ENCODE measurements at regions of chr4 and their contacts with region 1.

Region 1: DNA sequence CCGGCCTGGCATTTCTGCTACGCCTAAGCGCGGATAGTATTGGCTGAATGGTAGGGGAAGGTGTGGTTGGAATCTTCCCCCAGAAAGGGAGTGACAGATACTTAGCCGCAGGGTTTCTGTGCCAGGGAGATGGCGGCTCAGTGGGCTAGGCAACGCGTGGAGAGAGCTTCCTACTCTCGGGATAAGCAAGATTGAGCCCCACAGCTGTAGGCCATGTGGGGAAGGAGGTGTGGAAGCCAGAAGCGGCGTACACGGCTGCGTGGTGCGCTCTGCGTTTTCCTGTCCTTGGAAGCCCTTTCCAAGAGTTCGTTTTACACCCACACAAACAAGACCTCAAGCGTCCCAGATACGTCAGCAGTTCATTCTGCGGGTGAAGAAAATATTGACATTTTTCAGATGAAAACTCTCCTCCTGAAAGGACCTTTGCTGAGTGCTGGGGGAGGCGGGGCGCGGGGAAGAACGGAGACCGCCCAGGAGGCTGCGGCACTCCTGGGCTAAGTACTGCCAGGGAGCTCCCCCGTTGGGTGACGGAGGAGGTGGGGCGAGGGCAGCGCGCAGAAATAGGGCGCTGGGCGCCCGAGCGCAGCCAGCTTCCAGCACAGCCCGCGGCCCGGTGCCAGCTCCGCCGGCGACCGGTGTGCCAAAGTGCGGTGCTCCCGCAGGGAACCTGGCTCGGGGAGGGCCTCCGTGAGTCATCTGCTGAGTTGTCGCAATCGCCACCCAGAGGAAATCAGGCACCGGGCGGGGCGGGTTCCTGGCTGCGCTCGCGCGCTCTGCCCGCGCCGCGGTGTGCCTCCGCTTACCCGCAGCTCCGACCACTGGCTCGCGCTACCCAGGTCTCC is at the start of gene GPAT3:
- DNase-seq: peak; percentile 89
- H3K4me3 Mint-ChIP-seq: peak within 1 kb of the TSS; percentile 87
- H3K27ac Mint-ChIP-seq: peak within 1 kb of the TSS; percentile 61
- H3K4me1 Mint-ChIP-seq: peaks cover 13% of the 10 kb centered on the region
- H3K27me3 Mint-ChIP-seq: peaks cover 49% of the 10 kb centered on the region
- total RNA-seq, gene GPAT3: 3.6 and 3.7 TPM in 2 replicates

Region 2: DNA sequence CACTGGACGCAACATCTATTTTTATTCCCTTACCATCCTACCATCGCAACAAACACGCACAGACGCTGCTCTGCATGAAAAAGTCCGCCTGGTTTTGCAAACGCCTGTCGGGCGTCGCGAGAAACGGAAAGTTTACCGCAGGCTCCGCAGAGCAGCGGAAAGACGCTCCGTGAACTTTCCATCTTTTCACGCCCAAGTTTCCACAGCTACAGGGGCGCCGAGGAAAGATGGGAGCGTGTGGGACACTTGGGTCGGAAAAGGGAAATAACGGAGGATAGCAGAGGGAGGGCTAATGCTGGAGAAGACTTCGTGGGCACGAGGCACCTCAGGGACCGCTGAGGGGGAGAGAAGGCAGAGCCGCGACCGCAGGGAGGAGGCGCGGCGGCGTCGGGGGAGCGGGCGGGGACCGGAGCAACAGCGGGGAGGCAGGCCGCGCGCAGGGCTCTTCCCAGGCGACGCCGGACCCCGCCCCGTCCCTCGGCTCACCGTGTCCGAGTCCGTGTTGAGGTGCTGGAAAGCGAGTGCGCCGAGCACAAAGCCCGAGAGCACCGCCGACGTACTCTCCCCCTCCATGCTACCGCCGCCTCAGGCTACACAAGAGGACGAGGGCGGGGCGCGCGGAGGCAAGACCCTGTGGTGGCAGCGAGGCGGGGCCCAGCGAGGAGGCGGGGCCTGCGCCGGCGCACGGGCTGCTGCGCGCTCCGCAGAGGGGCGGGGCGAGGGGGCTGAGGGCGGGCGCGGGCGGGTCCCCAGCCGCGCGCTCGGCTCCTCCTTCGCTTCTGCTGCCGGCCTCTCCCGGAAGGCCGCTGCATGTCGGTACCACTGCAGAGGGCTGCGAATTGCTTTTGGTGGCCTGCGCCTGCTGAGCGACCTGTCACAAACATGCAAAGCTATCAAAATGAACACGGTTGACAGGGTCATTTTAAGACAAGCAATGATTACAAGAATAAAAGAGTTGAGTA is 51.0 kb before region 1 on chr4 and contains the start of gene ABRAXAS1:
- intact Hi-C with region 1: loop called (anchors 2 kb)
- DNase-seq: peak; percentile 98
- H3K4me3 Mint-ChIP-seq: peak within 1 kb of the TSS; percentile 96
- H3K27ac Mint-ChIP-seq: peak within 1 kb of the TSS; percentile 95
- H3K4me1 Mint-ChIP-seq: peaks cover 7% of the 10 kb centered on the region
- H3K27me3 Mint-ChIP-seq: no peaks in the 10 kb centered on the region
- total RNA-seq, gene ABRAXAS1: 10.4 and 12.0 TPM in 2 replicates

Region 3: DNA sequence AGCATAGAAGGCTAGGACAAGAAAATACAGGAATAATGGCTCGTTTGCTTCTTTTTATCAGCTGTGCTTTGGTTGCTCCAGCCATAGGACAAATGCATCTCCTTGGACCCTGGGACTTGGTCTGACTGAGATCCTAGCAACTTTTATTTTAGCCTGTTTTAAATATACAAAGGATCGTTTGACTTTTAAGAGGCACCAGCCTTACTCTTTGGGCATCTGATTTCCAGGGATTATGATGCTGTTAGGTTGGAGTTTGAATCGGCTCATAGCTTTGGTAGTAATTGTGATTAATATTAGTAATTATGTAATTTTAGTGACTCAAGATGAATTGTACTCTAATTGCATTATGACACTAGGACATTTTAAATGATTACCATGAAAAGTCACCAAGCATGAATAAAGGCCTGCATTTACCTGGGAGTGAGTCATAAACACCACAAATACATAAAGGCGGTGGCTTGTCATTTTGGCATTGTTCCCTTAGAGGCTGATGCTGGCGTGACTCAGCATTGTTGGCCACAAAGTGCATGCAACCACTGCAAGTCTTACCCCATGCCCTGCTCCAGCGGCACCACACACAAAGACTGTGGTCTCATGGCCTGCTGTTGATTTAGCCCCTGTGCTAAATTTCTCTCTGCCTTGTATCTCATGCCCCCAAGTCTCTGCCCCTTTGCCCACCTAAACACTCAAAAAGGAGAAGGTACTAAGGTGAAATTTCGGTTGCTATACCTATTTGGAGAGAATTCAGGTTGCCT is 12.6 kb after region 1 on chr4:
- intact Hi-C with region 1: loop called (anchors 1 kb)
- DNase-seq: peak; percentile 86
- H3K4me3 Mint-ChIP-seq: no peak overlapping the region
- H3K27ac Mint-ChIP-seq: peak overlapping the region; percentile 35
- H3K4me1 Mint-ChIP-seq: peaks cover 19% of the 10 kb centered on the region
- H3K27me3 Mint-ChIP-seq: no peaks in the 10 kb centered on the region

Region 4: DNA sequence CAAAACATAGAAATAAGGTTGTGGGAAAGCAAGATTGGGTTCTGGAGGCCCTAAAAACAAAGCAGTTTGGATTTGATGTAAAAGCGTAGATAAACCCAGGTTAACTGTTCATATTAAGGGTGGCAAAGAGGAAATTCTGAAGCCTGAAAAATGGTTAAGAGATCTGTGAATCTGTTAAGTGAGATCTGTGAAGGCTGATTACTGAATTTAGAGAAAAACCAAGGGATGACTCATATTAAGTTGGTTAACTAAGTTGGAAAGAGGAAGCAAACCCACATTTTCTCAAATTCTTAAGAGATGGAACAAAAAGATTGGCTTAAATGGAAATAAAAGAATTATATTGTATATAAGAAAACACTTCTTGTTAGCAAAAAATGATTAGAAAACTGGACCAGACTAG is 22.9 kb after region 1 on chr4:
- intact Hi-C with region 1: loop called (anchors 2 kb)
- DNase-seq: no peak
- H3K4me3 Mint-ChIP-seq: peak overlapping the region; percentile 46
- H3K27ac Mint-ChIP-seq: peak overlapping the region; percentile 64
- H3K4me1 Mint-ChIP-seq: peaks cover 24% of the 10 kb centered on the region
- H3K27me3 Mint-ChIP-seq: peaks cover 9% of the 10 kb centered on the region

Region 5: GRCh38 chr4:83961575-83961974 is 425.8 kb after region 1 on chr4:
- intact Hi-C with region 1: no loop called
- DNase-seq: no peak
- H3K4me3 Mint-ChIP-seq: no peak overlapping the region
- H3K27ac Mint-ChIP-seq: no peak overlapping the region
- H3K4me1 Mint-ChIP-seq: no peaks in the 10 kb centered on the region
- H3K27me3 Mint-ChIP-seq: no peaks in the 10 kb centered on the region

Measured in activated CD4-positive, alpha-beta T cell treated with anti-CD3 and anti-CD28 coated beads, Interleukin-2, amount 10 ng/mL, durations not matched to agents 24 days and 14 days (primary cell).